CD14-positive monocyte (primary cell): ENCODE measurements at regions of chr12 and their contacts with region 1.

Region 1: DNA sequence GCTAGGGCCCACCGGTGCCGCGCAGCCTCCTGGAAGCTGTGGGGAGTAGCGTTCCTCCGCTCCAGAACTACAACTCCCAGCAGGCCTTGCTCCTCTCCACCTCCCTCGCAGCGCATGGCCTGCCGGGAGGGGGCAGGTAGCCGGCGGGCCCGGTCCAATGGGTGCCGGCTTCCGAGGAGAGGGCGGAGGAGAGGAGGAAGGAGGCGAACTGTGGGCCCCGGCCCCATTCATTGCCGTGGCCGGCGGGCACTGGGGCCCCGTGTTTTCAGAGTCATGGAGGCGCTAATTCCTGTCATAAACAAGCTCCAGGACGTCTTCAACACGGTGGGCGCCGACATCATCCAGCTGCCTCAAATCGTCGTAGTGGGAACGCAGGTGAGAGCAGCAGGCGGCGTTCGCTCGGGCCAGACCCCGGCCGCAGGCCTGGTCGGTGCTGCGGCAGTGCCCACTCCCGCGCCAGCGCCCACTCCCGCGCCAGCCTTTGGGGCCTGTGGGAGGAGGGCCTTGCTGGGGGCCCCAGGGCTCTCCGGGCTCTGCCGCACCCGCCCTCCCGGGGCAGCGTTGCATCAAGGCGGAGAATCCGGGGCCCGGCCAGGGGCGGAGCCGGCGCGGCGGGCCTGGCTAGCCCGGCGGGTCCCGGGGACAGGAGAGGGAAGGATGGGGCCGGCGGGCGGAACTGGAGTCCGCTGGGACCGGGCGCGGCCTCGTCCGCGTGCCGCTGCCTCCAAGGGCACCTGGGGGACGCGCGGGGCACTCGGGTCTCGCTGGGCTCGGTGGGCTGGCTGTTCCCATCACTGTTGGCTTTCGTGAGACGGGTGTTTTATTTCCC is at the start of gene DNM1L:
- DNase-seq: peak; percentile 88 to 90 (median 89)
- H3K4me3 ChIP-seq: peak within 1 kb of the TSS; percentile 80 to 86 (median 83)
- H3K4me3 Mint-ChIP-seq: peak within 1 kb of the TSS; percentile 85 to 91
- H3K27ac ChIP-seq: peak within 1 kb of the TSS; percentile 88 to 93
- H3K27ac Mint-ChIP-seq: peak within 1 kb of the TSS; percentile 85 to 94 (median 92)
- H3K4me1 ChIP-seq: peaks cover 31 to 34% of the 10 kb centered on the region in 2 donors
- H3K4me1 Mint-ChIP-seq: peaks cover 35% of the 10 kb centered on the region
- H3K27me3 ChIP-seq: no peaks in the 10 kb centered on the region
- H3K27me3 Mint-ChIP-seq: peaks cover 0 to 1% (median 0%) of the 10 kb centered on the region in 3 donors
- CTCF ChIP-seq: no peak
- polyA plus RNA-seq, gene DNM1L: 23.6 to 45.6 (median 31.5) TPM

Region 2: DNA sequence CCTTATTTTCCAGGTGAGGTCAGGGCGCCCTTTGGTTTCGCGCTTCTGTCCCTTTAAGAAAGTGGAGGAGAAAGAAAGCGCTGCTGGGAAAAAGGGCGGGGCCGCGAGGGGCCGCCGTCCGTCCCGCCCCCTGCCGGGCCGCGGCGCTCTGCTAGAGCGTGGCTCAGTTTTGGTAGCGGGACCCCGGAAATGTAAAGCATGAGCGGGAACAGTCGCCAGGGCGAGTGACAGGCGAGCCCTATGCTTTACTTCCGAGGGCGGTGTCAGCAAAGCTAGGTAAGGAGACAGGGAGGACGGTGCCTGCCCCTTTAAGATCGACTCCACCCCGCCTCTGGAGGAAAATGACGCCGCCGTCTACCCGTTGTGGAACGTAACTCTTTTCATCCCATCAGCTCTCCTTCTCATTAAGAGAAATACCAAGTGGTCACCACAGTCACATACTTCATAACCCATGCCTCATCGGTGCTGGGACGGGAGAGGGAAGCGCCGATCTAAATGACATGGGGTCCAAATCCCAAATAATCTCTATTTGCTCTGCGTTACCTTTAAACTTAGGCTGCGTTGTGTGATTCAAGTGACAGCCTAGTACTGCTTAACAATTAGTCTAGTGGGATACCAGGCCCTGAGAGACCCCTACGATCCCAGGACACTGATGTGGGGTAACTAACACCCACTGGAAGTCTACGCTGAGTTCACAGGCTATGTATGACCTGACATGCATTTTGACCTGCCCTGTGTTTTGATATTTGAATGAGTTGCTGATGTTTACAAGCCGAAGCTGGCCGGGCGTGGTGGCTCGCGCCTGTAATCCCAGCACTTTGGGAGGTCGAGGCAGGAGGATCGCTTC is 1020.0 kb before region 1 on chr12 and contains the start of gene ETFBKMT:
- intact Hi-C with region 1: loop called in 1 of 2 experiments (anchors 10 kb)
- DNase-seq: peak; percentile 73 to 81 (median 75)
- H3K4me3 ChIP-seq: peak within 1 kb of the TSS; percentile 61 to 99 (median 96)
- H3K4me3 Mint-ChIP-seq: peak within 1 kb of the TSS; percentile 82 to 97
- H3K27ac ChIP-seq: peak within 1 kb of the TSS; percentile 93 to 98
- H3K27ac Mint-ChIP-seq: peak within 1 kb of the TSS; percentile 96 to 98 (median 98)
- H3K4me1 ChIP-seq: peaks cover 7 to 14% of the 10 kb centered on the region in 2 donors
- H3K4me1 Mint-ChIP-seq: peaks cover 14% of the 10 kb centered on the region
- H3K27me3 ChIP-seq: no peaks in the 10 kb centered on the region
- H3K27me3 Mint-ChIP-seq: peaks cover 0 to 2% (median 1%) of the 10 kb centered on the region in 3 donors
- CTCF ChIP-seq: no peak
- polyA plus RNA-seq, gene ETFBKMT: 0.67 to 2.2 (median 1.5) TPM

Region 3: GRCh38 chr12:32365473-32366064 is 313.7 kb before region 1 on chr12:
- intact Hi-C with region 1: loop called (anchors 10 kb)
- DNase-seq: peak; percentile 57 to 69 (median 65)
- H3K4me3 ChIP-seq: no peak overlapping the region
- H3K4me3 Mint-ChIP-seq: no peak overlapping the region
- H3K27ac ChIP-seq: no peak overlapping the region
- H3K27ac Mint-ChIP-seq: no peak overlapping the region
- H3K4me1 ChIP-seq: no peaks in the 10 kb centered on the region
- H3K4me1 Mint-ChIP-seq: no peaks in the 10 kb centered on the region
- H3K27me3 ChIP-seq: no peaks in the 10 kb centered on the region
- H3K27me3 Mint-ChIP-seq: peaks cover 0 to 2% (median 0%) of the 10 kb centered on the region in 3 donors
- CTCF ChIP-seq: peak; percentile 93

Region 4: GRCh38 chr12:32455607-32456071 is 223.7 kb before region 1 on chr12:
- intact Hi-C with region 1: loop called (anchors 10 kb)
- DNase-seq: peak; percentile 62 to 79 (median 65)
- H3K4me3 ChIP-seq: peak overlapping the region; percentile 44 to 72 (median 70)
- H3K4me3 Mint-ChIP-seq: peak overlapping the region; percentile 37 to 68
- H3K27ac ChIP-seq: peak overlapping the region in 1 of 2 donors; percentile 65
- H3K27ac Mint-ChIP-seq: peak overlapping the region in 6 of 7 donors; percentile 40 to 61 (median 58)
- H3K4me1 ChIP-seq: peaks cover 10 to 23% of the 10 kb centered on the region in 2 donors
- H3K4me1 Mint-ChIP-seq: peaks cover 19% of the 10 kb centered on the region
- H3K27me3 ChIP-seq: no peaks in the 10 kb centered on the region
- H3K27me3 Mint-ChIP-seq: peaks cover 0 to 5% (median 0%) of the 10 kb centered on the region in 3 donors
- CTCF ChIP-seq: peak; percentile 79